PC-3 (cell line): ENCODE measurements at regions of chr2 and their contacts with region 1.

Region 1: GRCh38 chr2:146523196-146523595 is 1321.6 kb upstream of the ACVR2A start:
- DNase-seq: peak; percentile 59
- ATAC-seq: no peak
- H3K4me3 ChIP-seq: no peak overlapping the region
- H3K27ac ChIP-seq: no peak overlapping the region
- H3K4me1 ChIP-seq: no peaks in the 10 kb centered on the region
- H3K27me3 ChIP-seq: no peaks in the 10 kb centered on the region
- CTCF ChIP-seq: peak; percentile 69

Region 2: DNA sequence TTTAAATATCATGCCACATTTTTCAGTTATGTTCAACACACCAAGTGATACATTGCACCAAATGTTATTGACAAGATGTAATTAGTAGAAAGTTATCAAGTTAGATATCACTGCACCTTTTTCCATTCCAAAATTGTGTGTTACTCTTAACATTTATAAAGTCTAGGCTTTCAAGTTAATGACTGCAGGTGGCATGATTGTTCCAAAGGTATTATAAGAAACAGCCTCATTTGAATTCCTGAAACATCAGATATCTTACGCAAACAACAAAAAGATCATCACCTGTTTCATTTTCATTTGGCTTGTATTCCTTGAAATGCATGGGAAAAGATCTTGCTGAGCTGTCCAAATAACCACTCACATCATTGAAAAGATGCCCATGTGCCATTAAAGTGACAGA is 475.1 kb before region 1 on chr2:
- CTCF ChIA-PET with region 1: interaction called, 3 read pairs
- POLR2A ChIA-PET with region 1: no interaction called
- intact Hi-C with region 1: loop called (anchors 1 kb)
- DNase-seq: no peak
- ATAC-seq: no peak
- H3K4me3 ChIP-seq: no peak overlapping the region
- H3K27ac ChIP-seq: no peak overlapping the region
- H3K4me1 ChIP-seq: no peaks in the 10 kb centered on the region
- H3K27me3 ChIP-seq: no peaks in the 10 kb centered on the region
- CTCF ChIP-seq: no peak

Region 3: GRCh38 chr2:146312899-146313298 is 210.3 kb before region 1 on chr2:
- CTCF ChIA-PET with region 1: no interaction called
- POLR2A ChIA-PET with region 1: no interaction called
- intact Hi-C with region 1: loop called (anchors 2 kb)
- DNase-seq: peak; percentile 52
- ATAC-seq: peak; percentile 48
- H3K4me3 ChIP-seq: no peak overlapping the region
- H3K27ac ChIP-seq: no peak overlapping the region
- H3K4me1 ChIP-seq: peaks cover 5% of the 10 kb centered on the region
- H3K27me3 ChIP-seq: no peaks in the 10 kb centered on the region
- CTCF ChIP-seq: peak; percentile 63

Region 4: DNA sequence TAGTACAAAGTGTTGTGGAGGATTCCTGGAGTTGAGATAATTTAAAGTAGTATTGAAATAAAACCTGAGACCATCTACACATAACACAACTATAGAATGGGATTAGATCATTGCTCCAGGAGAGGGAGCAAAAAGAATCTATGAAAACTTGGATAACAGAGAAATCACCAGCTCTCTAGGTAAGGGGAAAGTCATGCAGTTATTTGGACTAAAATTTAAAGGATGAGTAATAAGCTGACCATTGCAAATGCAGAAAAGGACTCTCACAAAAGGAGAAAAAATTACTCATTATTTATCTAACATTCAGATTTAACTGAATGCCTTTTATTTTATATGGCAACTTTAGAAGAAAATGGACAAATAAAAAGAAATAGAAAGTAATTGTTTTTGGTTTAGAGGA is 78.2 kb before region 1 on chr2:
- CTCF ChIA-PET with region 1: no interaction called
- POLR2A ChIA-PET with region 1: no interaction called
- intact Hi-C with region 1: loop called (anchors 1 kb)
- DNase-seq: peak; percentile 42
- ATAC-seq: peak; percentile 94
- H3K4me3 ChIP-seq: no peak overlapping the region
- H3K27ac ChIP-seq: no peak overlapping the region
- H3K4me1 ChIP-seq: peaks cover 11% of the 10 kb centered on the region
- H3K27me3 ChIP-seq: no peaks in the 10 kb centered on the region
- CTCF ChIP-seq: no peak

Region 5: GRCh38 chr2:146785101-146785500 is 261.9 kb after region 1 on chr2:
- CTCF ChIA-PET with region 1: no interaction called
- POLR2A ChIA-PET with region 1: no interaction called
- intact Hi-C with region 1: no loop called
- DNase-seq: no peak
- ATAC-seq: no peak
- H3K4me3 ChIP-seq: no peak overlapping the region
- H3K27ac ChIP-seq: no peak overlapping the region
- H3K4me1 ChIP-seq: no peaks in the 10 kb centered on the region
- H3K27me3 ChIP-seq: no peaks in the 10 kb centered on the region
- CTCF ChIP-seq: no peak